Brain microvascular endothelial cell (primary cell): ENCODE measurements at regions of chr10 and their contacts with region 1.

Region 1: DNA sequence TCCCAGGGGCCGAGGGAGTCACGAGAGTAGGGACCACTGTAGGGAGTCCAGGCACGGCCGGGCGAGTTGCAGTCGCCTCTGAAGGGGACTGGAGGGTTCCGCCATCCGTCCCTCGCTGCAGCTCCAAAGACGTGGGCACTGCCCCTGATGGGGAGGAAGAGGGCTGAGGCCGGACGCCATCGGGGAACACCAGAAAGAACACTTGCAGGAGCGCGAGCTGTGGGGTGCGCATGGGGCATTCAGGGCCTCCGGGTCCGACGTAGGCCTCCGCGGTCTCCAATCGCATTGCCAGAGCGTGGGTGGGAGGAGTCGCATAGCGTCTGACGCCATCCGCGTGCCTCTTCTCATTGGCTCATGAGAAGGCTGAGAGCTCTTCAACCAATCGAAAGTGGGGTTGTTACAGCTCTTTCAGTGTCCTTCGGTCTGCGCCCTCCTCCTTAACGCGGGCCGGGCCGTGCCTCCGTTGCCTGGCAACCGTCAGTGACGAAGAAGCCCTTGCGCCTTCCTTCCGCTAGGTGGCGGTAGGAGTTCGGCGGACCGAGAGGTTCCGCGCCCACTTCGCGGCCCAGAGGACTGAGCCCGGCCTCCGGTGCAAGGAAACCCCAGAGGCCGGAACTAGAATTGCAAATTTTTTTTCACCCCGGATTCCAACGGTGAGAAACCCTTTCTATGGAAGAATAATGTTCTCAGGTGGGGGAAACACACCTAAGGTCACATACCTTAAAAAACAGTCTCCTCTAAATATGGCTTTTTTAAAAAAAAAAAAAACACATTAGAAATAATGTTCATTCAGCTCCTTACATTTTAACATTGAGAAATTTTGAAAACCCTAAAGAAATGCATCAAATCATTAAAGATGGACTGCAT is at the start of gene TCTN3:
- DNase-seq: peak; percentile 99
- H3K4me3 ChIP-seq: peak within 1 kb of the TSS; percentile 98
- H3K27ac ChIP-seq: peak within 1 kb of the TSS; percentile 67
- H3K27me3 ChIP-seq: no peaks in the 10 kb centered on the region
- CTCF ChIP-seq: peak; percentile 99

Region 2: GRCh38 chr10:95864906-95865813 is 171.3 kb after region 1 on chr10:
- in situ Hi-C with region 1: loop called (anchors 25 kb)
- DNase-seq: peak; percentile 77
- H3K4me3 ChIP-seq: no peak overlapping the region
- H3K27ac ChIP-seq: no peak overlapping the region
- H3K27me3 ChIP-seq: no peaks in the 10 kb centered on the region
- CTCF ChIP-seq: peak; percentile 91